ENCODE measurements at regions of chr3 and their contacts with region 1.

Region 1: GRCh38 chr3:146914409-146914808 is 309.3 kb upstream of the PLSCR5 start:
- DNase-seq: no peak
- H3K4me3 ChIP-seq: no peak overlapping the region
- H3K27ac ChIP-seq: no peak overlapping the region
- H3K4me1 ChIP-seq: no peaks in the 10 kb centered on the region
- H3K27me3 ChIP-seq: no peaks in the 10 kb centered on the region
- CTCF ChIP-seq: no peak
- POLR2A ChIP-seq: no peak

Region 2: GRCh38 chr3:145159640-145160039 is 1754.8 kb before region 1 on chr3:
- intact Hi-C with region 1: no loop called
- DNase-seq: no peak
- H3K4me3 ChIP-seq: no peak overlapping the region
- H3K27ac ChIP-seq: no peak overlapping the region
- H3K4me1 ChIP-seq: no peaks in the 10 kb centered on the region
- H3K27me3 ChIP-seq: no peaks in the 10 kb centered on the region
- CTCF ChIP-seq: no peak
- POLR2A ChIP-seq: no peak

Region 3: DNA sequence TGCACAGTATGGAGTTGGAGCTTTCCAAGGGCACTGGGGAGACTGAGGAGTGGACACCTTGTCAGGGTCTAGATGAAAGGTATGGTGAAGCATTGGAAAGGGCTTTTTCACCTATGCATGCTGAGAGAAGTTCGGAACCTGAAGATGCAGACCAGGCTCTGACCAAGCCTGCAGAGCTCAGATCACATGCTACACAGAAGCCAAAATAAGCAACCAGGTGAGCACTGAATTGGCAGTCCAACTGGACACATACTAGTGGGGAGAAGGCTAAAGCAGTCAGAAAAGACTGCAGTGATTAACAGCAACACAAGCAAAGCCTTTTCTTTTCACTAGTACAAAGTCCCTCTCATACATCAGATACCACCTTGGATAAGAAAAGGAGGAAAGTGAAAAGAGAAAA is 70.9 kb before region 1 on chr3:
- intact Hi-C with region 1: loop called (anchors 2 kb)
- DNase-seq: no peak
- H3K4me3 ChIP-seq: no peak overlapping the region
- H3K27ac ChIP-seq: no peak overlapping the region
- H3K4me1 ChIP-seq: no peaks in the 10 kb centered on the region
- H3K27me3 ChIP-seq: no peaks in the 10 kb centered on the region
- CTCF ChIP-seq: no peak
- POLR2A ChIP-seq: no peak